Activated naive CD4-positive, alpha-beta T cell treated with anti-CD3 and anti-CD28 coated beads, Interleukin-2, amount 10 ng/mL, durations not matched to agents 7 days and 5 days (primary cell): ENCODE measurements at regions of chr14 and their contacts with region 1.

Region 1: DNA sequence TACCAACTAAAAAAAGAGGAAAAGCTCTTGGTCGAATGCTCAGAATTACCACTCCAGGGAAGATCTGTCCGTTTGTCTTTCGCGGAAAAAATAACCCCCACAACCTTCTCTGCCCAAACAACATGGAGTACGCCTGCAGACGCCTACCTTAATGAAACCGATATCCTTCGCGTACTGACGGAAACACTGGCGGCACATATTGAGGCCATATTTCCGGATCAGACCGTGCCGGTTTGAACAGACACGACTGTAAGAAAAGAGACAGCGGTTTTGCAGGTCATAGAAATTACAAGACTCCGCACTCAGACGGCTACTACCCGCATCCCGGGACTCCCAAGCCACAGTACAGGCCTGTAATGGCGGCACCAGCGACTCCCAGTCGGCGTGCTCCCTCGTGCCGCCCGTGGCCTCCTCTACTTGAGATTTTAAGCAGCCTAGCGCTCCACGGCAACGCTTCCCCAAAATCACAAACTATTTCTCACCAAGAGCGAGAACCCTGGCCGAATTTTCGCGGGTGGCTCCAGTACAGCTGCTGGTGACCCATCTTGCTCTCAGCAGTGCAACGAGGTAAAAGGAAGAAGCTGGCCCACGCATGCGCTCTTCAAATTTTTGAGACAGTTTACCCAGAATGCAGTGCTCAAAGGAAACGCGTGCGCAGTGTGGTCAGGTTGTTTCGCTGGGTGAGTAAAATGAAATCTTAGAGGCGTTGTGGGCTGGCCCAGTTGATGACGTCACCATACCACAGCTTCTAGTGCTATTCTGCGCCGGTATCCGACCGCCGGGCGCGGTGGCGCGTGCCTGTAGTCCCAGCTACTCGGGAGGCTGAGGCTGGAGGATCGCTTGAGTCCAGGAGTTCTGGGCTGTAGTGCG is at the start of gene RPS29:
- DNase-seq: peak; percentile 99
- H3K4me3 Mint-ChIP-seq: peak within 1 kb of the TSS; percentile 89
- H3K27ac Mint-ChIP-seq: peak within 1 kb of the TSS; percentile 99
- H3K4me1 Mint-ChIP-seq: peaks cover 48% of the 10 kb centered on the region
- H3K27me3 Mint-ChIP-seq: peaks cover 4% of the 10 kb centered on the region

Region 2: DNA sequence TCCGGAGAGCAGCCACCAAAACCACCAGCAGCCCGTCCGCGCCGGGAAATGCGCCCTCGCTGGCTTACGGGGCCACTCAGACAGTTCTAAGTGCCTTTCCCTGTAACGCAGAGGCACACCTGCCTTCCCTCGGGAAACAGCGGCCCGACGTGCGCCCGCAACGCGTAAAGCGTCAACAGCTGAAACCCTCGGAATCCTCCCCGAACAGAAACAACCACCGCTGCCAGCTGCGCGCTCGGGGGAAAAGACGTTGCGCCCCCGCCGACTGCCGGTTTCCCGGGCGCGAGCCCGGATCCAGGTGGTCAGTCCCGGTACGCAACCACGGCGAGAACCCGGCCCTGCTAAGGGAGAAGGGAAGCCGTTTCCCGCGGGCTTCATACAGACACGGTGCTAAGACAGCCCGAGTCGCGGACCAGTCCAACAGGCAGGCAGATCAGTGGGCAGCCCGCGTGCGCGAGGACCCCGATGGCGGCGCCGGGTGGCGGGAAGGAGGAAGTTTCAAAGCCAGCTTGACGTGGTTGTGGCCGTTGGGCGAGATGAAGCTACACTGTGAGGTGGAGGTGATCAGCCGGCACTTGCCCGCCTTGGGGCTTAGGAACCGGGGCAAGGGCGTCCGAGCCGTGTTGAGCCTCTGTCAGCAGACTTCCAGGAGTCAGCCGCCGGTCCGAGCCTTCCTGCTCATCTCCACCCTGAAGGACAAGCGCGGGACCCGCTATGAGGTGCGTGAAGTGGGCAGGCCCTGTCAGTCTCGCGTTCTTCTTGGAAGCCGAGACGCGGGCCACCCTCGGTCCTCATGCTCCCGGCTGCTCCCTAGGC is 12.7 kb after region 1 on chr14 and contains the start of gene LRR1:
- CTCF ChIA-PET with region 1: interaction called, 16 read pairs
- DNase-seq: peak; percentile 89
- H3K4me3 Mint-ChIP-seq: peak within 1 kb of the TSS; percentile 96
- H3K27ac Mint-ChIP-seq: peak within 1 kb of the TSS; percentile 99
- H3K4me1 Mint-ChIP-seq: peaks cover 53% of the 10 kb centered on the region
- H3K27me3 Mint-ChIP-seq: peaks cover 4% of the 10 kb centered on the region